Endothelial cell of umbilical vein (primary cell): ENCODE measurements at regions of chr3 and their contacts with region 1.

Region 1: DNA sequence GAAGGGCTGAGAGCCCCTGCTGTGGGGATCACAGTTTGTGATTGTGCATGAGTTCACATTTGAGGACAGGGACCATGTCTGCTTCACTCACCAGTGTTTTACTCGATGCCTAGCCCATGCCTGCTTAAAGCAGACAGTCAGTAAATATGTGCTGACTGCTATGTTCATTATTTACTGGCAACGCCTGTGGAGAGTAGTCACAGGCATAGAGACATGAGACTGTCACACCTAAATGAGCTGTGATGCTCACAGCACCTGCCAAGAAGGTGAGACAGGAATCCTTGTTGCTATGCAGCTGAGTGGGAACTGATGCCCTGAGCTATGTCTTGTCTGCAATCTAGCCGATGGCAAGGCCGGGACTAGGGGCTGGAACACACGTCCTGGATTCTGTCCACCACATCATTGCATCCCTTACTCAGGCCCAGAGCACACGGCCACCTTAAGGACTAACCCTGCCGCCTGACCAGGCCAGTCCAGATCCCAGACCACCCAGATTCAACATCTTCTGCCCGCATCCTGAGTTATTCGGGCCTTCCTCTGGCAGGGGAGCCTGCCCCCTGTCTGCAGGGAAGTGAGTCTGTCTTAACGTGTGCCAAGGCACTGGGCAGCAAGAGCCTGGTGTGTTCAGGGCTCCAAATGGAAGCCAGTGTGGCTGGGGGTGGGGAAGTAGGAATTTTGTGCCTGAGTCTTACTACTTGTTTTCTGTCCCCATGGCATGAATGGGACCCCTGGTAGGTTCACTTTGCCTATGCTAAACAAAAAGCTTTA is 44.8 kb downstream of the FGD5 start:
- DNase-seq: peak; percentile 40
- H3K4me3 ChIP-seq: no peak overlapping the region
- H3K27ac ChIP-seq: no peak overlapping the region
- H3K4me1 ChIP-seq: peaks cover 24% of the 10 kb centered on the region
- H3K27me3 ChIP-seq: no peaks in the 10 kb centered on the region
- CTCF ChIP-seq: peak; percentile 53 to 54
- POLR2A ChIP-seq: no peak

Region 2: DNA sequence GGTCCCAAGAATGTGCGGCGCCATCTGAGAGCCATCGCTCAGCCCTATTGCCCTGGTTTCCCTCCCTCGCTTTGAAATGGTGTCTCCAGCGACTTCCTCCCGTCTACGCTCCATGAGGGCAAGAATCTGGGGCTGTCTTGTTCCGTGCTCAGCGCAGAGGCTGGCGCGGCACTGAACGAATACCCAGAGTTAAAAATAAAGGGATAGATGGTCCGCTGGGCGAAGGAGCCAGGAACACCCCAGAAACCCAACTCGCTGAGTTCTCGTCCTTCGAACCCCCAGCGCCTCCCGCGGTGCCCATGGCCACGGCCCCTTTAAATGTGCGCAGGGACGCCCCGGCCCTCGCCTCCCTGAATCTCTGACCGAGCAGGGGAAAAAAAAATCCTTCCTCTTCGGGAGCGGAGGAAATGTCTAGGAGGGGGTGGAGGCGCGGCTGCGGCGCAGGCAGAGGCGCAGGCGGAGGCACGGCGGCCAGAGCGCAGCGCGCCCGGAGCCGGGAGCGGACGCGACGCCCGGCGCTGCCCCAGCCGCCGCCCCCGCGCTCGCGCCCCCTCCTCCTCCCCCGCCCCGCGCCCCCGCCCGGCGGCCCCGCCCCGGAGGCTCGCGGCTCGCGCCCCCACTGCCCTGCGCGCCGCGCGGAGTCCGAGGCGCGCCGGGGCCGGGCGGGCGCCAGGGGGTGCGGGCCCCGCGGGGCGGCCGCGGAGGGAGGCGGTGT is 53.3 kb before region 1 on chr3:
- CTCF ChIA-PET with region 1: interaction called, 3 read pairs
- POLR2A ChIA-PET with region 1: no interaction called
- dilution Hi-C with region 1: no loop called
- intact Hi-C with region 1: loop called (anchors 5 kb)
- DNase-seq: peak; percentile 81
- H3K4me3 ChIP-seq: peak overlapping the region; percentile 36 to 87 (median 77)
- H3K27ac ChIP-seq: peak overlapping the region; percentile 61
- H3K4me1 ChIP-seq: peaks cover 50% of the 10 kb centered on the region
- H3K27me3 ChIP-seq: no peaks in the 10 kb centered on the region
- CTCF ChIP-seq: no peak
- POLR2A ChIP-seq: no peak

Region 3: DNA sequence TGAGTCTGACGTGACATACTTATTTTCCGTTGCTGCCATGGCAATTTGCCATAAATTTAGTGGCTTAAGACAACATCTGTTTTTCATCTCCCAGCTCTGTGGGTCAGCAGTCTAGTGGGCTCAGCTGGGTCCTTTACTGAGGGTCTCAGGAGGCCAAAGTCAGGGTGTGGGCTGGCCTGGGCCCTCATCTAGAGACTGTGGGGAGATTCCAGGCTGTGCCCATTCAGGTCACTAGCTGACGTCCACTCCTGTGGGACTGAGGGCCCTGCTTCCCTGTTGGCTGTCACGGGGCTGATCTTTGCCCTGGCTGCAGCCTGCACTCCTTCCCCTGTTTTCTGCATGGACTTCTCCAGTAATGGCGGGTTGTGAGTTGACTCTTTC is 25.6 kb before region 1 on chr3:
- CTCF ChIA-PET with region 1: interaction called, 5 read pairs
- POLR2A ChIA-PET with region 1: no interaction called
- dilution Hi-C with region 1: no loop called
- intact Hi-C with region 1: loop called (anchors 2 kb)
- DNase-seq: peak; percentile 32
- H3K4me3 ChIP-seq: no peak overlapping the region
- H3K27ac ChIP-seq: no peak overlapping the region
- H3K4me1 ChIP-seq: peaks cover 8% of the 10 kb centered on the region
- H3K27me3 ChIP-seq: no peaks in the 10 kb centered on the region
- CTCF ChIP-seq: no peak
- POLR2A ChIP-seq: no peak

Region 4: DNA sequence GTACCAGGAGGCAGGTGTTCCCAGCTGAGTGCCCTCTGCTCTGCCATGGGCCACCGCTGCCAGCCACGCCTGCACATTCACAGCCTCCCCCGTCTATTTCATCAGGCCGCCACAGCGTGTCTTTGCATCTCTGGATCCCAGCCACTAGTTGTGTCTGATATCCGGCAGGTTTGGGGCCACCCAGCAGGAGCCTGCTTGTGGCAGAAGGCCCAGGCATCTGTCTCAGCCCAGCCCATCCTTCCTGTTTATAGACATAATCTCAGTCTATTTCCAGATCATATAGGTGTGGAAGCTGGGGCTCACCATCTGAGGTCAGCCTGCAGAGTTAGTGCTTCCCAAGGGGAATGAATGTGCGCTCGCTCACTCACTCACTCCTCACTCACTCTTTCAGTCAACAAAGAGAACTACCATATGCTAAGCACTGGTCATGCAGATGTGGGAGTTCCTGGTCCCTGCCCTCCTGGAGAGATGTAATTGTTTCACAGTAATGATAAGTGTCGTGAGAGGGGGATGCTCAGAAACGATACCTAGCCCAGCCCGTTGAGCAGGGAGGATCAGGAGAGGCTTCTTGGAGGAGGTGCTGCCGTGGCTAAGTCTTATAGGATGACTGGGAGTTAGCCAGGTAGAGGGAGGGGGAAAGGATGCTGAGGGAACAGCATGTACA is 15.8 kb after region 1 on chr3:
- CTCF ChIA-PET with region 1: interaction called, 3 read pairs
- POLR2A ChIA-PET with region 1: no interaction called
- dilution Hi-C with region 1: no loop called
- intact Hi-C with region 1: loop called (anchors 2 kb)
- DNase-seq: no peak
- H3K4me3 ChIP-seq: no peak overlapping the region
- H3K27ac ChIP-seq: no peak overlapping the region
- H3K4me1 ChIP-seq: peaks cover 13% of the 10 kb centered on the region
- H3K27me3 ChIP-seq: no peaks in the 10 kb centered on the region
- CTCF ChIP-seq: no peak
- POLR2A ChIP-seq: no peak